Heart left ventricle (tissue), 16 donors: ENCODE measurements at regions of chr4 and their contacts with region 1.

Region 1: DNA sequence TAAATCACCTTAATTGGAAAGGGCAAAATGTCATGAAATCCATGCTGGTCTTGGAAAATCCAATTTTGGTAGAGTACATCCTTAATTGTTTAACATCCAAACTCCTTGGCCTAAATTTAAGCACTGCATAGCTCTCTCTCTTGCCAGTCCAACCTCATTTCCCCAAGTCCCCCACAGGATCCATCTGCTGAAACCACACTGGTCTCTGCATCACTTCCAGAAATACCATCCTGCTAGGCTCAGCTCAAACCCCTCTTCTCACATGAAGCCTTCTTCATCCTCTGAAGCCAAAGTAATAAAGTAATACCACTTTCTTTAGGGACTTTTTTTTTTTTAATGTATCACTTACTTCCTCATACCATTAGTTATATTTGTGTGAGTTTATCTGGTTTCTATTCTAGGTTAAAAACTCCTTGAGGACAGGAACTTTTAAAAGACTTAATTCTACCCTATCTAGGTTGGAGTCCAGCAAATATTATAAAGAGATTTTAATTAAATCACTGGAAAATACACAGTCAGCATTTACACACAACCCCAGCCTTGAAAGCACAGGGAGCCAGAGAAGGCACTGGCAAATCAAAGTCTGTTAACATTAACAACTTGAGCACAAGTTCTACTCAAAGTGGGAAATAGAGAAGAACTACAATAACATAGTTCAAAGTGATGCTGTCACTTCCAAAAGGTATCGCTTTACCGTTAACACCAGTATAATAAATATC is 16.7 kb upstream of the KLF3 start:
- DNase-seq: no peak
- ATAC-seq: no peak
- H3K4me3 ChIP-seq: no peak overlapping the region
- H3K27ac ChIP-seq: no peak overlapping the region
- H3K4me1 ChIP-seq: no peaks in the 10 kb centered on the region
- H3K27me3 ChIP-seq: no peaks in the 10 kb centered on the region
- CTCF ChIP-seq: no peak
- POLR2A ChIP-seq: no peak

Region 2: DNA sequence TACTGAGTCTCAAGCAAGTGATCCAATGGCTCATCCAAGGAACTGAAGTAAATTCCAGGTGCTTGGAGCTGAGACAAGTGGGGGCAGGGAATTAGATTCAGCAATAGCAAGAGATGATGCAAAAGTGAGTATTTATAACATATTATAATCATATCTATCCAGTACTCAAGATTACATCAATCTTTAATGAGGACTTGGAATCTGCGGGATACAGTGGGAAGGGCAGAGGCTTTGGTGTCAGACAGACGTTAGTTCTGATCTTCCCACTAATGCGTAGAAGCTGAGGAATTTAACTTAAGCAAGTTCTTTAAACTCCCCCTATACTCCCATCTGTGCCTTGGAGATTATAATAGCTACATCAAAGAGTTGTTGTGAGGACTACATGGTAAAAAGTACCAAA is 1546.1 kb before region 1 on chr4:
- intact Hi-C with region 1: no loop called
- DNase-seq: no peak
- ATAC-seq: no peak
- H3K4me3 ChIP-seq: no peak overlapping the region
- H3K27ac ChIP-seq: no peak overlapping the region
- H3K4me1 ChIP-seq: no peaks in the 10 kb centered on the region
- H3K27me3 ChIP-seq: no peaks in the 10 kb centered on the region
- CTCF ChIP-seq: no peak
- POLR2A ChIP-seq: no peak

Region 3: GRCh38 chr4:38574559-38575333 is 72.5 kb before region 1 on chr4:
- intact Hi-C with region 1: loop called in 2 of 10 experiments (anchors 10 kb)
- DNase-seq: no peak
- ATAC-seq: peak in 2 of 4 donors; percentile 22 to 29
- H3K4me3 ChIP-seq: no peak overlapping the region
- H3K27ac ChIP-seq: no peak overlapping the region
- H3K4me1 ChIP-seq: peaks cover 0 to 26% (median 0%) of the 10 kb centered on the region in 12 donors
- H3K27me3 ChIP-seq: no peaks in the 10 kb centered on the region
- CTCF ChIP-seq: no peak
- POLR2A ChIP-seq: no peak